Heart right ventricle (tissue), 16 donors: ENCODE measurements at regions of chr22 and their contacts with region 1.

Region 1: GRCh38 chr22:29689880-29690213 is 30.0 kb upstream of the CABP7 start:
- DNase-seq: peak; percentile 43 to 51
- ATAC-seq: peak in 6 of 8 donors; percentile 65 to 79 (median 73)
- H3K4me3 ChIP-seq: no peak overlapping the region
- H3K27ac ChIP-seq: no peak overlapping the region
- H3K4me1 ChIP-seq: no peaks in the 10 kb centered on the region
- H3K27me3 ChIP-seq: no peaks in the 10 kb centered on the region
- CTCF ChIP-seq: peak; percentile 34 to 77 (median 72)

Region 2: DNA sequence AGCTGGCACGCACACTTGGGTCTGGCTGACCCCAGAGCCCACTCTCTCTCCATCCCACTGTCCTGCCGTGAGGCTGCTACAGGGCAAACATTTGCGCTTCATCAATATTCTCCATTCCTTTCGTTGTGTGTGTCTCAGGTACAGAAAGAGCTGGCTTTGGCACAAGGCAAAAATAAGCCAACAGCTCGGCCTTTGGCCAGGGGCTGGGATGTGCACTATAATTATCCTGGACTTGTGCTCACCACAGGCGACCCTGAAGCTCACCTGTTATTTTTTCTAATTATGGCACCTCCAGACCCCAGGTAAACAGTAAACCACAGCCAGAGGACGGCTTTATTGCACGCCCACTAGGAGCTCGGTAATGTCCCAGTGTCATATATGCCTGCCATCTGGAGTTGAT is 66.0 kb after region 1 on chr22:
- intact Hi-C with region 1: loop called in 1 of 10 experiments (anchors 2 kb)
- DNase-seq: no peak
- ATAC-seq: peak in 2 of 8 donors; percentile 33 to 44
- H3K4me3 ChIP-seq: no peak overlapping the region
- H3K27ac ChIP-seq: no peak overlapping the region
- H3K4me1 ChIP-seq: peaks cover 0 to 18% (median 10%) of the 10 kb centered on the region in 9 donors
- H3K27me3 ChIP-seq: no peaks in the 10 kb centered on the region
- CTCF ChIP-seq: no peak

Region 3: GRCh38 chr22:30015846-30016245 is 326.0 kb after region 1 on chr22:
- intact Hi-C with region 1: loop called in 1 of 10 experiments (anchors 10 kb)
- DNase-seq: no peak
- ATAC-seq: no peak
- H3K4me3 ChIP-seq: no peak overlapping the region
- H3K27ac ChIP-seq: no peak overlapping the region
- H3K4me1 ChIP-seq: no peaks in the 10 kb centered on the region
- H3K27me3 ChIP-seq: no peaks in the 10 kb centered on the region
- CTCF ChIP-seq: no peak

Region 4: GRCh38 chr22:30079952-30080533 is 390.2 kb after region 1 on chr22 and contains the start of gene HORMAD2:
- intact Hi-C with region 1: loop called in 6 of 10 experiments (anchors 5 to 10 kb)
- DNase-seq: peak in 1 of 2 donors; percentile 9
- ATAC-seq: peak in 1 of 8 donors; percentile 56
- H3K4me3 ChIP-seq: peak within 1 kb of the TSS in 7 of 10 donors; percentile 18 to 43 (median 33)
- H3K27ac ChIP-seq: no peak within 1 kb of the TSS
- H3K4me1 ChIP-seq: peaks cover 0 to 7% (median 4%) of the 10 kb centered on the region in 9 donors
- H3K27me3 ChIP-seq: peaks cover 0 to 48% (median 37%) of the 10 kb centered on the region in 7 donors
- CTCF ChIP-seq: no peak
- total RNA-seq, gene HORMAD2: not detected

Region 5: GRCh38 chr22:30089655-30089974 is 399.8 kb after region 1 on chr22:
- intact Hi-C with region 1: loop called in 8 of 10 experiments (anchors 1 to 10 kb)
- DNase-seq: no peak
- ATAC-seq: no peak
- H3K4me3 ChIP-seq: no peak overlapping the region
- H3K27ac ChIP-seq: no peak overlapping the region
- H3K4me1 ChIP-seq: peaks cover 0 to 7% (median 0%) of the 10 kb centered on the region in 9 donors
- H3K27me3 ChIP-seq: peaks cover 0 to 24% (median 11%) of the 10 kb centered on the region in 7 donors
- CTCF ChIP-seq: no peak